Heart right ventricle (tissue), 16 donors: ENCODE measurements at regions of chr2 and their contacts with region 1.

Region 1: DNA sequence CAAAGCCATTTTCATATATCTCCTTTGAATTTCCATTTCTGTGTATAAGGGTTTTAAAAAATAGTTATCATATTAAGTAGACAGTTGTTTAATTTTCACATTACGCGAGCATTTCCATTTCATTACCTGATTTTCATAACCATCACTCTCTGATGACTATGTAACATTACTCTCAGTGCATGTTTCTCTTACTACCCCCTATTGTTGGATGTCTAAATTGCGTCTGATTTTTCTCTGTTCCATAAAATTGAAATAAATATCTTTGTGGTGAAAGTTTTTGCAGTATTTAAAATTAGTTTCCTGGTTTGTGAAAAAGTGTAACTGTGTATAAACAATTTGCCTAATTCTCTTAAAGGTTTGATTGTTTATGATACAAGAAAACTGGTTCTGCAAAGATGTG is 123.8 kb downstream of the MYO1B start:
- DNase-seq: no peak
- ATAC-seq: no peak
- H3K4me3 ChIP-seq: no peak overlapping the region
- H3K27ac ChIP-seq: no peak overlapping the region
- H3K4me1 ChIP-seq: peaks cover 0 to 15% (median 0%) of the 10 kb centered on the region in 9 donors
- H3K27me3 ChIP-seq: no peaks in the 10 kb centered on the region
- CTCF ChIP-seq: peak in 6 of 9 donors; percentile 21 to 48 (median 34)

Region 2: DNA sequence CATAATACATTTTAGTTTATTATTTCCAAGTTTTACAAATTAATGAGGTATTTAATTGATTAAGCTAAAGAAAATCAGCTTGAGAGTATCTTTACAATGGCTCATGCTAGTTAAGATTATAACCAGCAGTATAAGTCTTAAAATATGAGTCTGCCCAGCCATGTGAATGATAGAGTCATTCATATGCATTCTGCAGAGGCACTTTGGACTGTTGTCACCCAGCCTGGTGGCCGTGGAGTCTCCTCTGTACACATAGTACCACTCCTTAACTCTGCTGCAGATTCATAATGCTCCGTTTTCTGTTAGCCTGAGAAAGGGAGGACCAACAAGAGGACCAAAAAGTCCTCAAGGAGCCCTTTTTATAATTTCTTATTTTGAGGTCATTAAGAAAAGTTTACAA is 25.0 kb after region 1 on chr2:
- intact Hi-C with region 1: loop called in 1 of 10 experiments (anchors 1 kb)
- DNase-seq: no peak
- ATAC-seq: no peak
- H3K4me3 ChIP-seq: no peak overlapping the region
- H3K27ac ChIP-seq: peak overlapping the region in 1 of 10 donors; percentile 38
- H3K4me1 ChIP-seq: peaks cover 0 to 5% (median 0%) of the 10 kb centered on the region in 9 donors
- H3K27me3 ChIP-seq: no peaks in the 10 kb centered on the region
- CTCF ChIP-seq: no peak

Region 3: GRCh38 chr2:191441496-191442214 is 72.6 kb after region 1 on chr2:
- intact Hi-C with region 1: no loop called
- DNase-seq: peak; percentile 33 to 43
- ATAC-seq: peak; percentile 26 to 91 (median 75)
- H3K4me3 ChIP-seq: no peak overlapping the region
- H3K27ac ChIP-seq: peak overlapping the region in 9 of 10 donors; percentile 15 to 74 (median 49)
- H3K4me1 ChIP-seq: peaks cover 0 to 17% (median 0%) of the 10 kb centered on the region in 9 donors
- H3K27me3 ChIP-seq: no peaks in the 10 kb centered on the region
- CTCF ChIP-seq: no peak